Calu3 (cell line): ENCODE measurements at regions of chr10 and their contacts with region 1.

Region 1: GRCh38 chr10:77846718-77847630 is 79.6 kb downstream of the DLG5 start:
- DNase-seq: peak; percentile 91
- H3K4me3 Mint-ChIP-seq: no peak overlapping the region
- H3K27ac Mint-ChIP-seq: peak overlapping the region; percentile 21
- H3K4me1 Mint-ChIP-seq: peaks cover 66% of the 10 kb centered on the region
- H3K27me3 Mint-ChIP-seq: no peaks in the 10 kb centered on the region
- CTCF ChIP-seq: peak; percentile 97

Region 2: DNA sequence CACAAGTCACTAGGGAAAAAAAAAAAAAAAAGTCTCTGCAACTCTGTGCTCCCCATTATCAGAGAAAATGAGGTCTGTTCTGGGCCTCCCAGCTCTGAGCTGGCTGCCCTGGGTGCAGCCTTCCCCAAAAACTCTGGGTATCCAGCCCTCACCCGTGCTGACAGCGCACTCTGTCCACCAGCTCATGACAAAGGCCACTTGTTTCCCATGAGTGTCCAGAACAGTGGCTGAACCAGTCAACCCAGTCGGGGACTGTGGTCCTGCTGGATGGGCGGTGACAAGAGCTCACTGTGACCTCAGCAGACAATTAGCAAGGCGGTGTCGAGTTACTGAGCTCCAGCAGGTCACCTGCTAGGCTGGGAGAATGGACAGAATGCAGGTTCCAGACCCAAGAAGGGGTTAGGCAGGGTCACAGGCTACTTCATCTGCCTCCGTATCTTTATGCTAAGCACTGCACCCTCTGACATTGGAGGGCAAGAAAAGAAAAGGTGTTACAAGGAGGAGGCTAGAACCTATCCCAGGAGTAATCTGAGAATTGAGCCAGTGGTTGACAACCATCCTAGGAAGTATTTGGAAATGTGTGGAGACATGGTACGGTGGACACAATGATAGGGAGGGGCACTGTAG is 42.4 kb after region 1 on chr10:
- CTCF ChIA-PET with region 1: interaction called, 7 read pairs
- intact Hi-C with region 1: loop called (anchors 5 kb)
- DNase-seq: peak; percentile 97
- H3K4me3 Mint-ChIP-seq: peak overlapping the region; percentile 47
- H3K27ac Mint-ChIP-seq: peak overlapping the region; percentile 87
- H3K4me1 Mint-ChIP-seq: peaks cover 57% of the 10 kb centered on the region
- H3K27me3 Mint-ChIP-seq: no peaks in the 10 kb centered on the region
- CTCF ChIP-seq: no peak

Region 3: DNA sequence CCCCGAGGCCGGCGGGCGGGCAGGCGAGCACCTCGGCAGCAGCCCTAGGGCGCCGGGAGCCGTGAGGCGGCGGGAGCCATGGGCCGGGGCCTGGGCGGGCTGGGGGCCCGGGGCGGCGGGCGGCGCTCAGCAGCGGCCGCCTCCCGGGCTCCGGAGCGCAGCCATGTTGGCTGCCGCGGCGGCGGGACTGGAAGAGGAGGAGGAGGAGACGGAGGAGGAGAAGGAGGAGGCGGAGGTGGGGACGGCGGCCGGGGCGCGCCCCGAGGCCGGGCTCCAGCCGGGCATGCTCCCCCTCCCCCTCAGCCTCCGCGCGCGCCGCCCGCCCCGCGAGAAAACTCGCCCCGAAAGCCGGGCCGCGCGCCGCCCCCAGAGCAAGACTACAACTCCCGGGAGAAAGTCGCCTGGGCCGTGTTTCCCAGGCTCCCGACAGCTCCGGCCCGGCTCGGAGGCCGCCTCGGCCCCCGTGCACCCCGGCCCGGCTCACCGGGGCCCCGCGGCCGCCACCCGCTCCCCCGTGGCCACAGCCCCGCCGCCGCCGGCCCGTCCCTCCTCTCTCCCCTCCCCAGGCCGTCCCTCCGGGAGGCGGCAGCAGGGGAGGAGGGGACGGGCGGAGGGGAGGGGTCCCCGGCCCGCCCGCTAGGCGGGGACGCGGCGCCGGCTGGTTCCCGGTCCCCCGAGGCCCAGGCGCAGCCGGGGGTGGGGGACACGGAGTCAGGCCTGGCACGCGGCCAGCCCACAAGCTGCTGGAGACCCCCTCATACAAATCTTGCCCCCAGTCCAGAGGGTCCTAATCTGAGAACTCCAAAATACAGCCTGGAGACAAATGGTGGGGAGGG is 79.8 kb after region 1 on chr10 and contains the start of gene DLG5:
- CTCF ChIA-PET with region 1: interaction called, 4 read pairs
- intact Hi-C with region 1: loop called (anchors 1 kb)
- DNase-seq: peak; percentile 69
- H3K4me3 Mint-ChIP-seq: peak within 1 kb of the TSS; percentile 81
- H3K27ac Mint-ChIP-seq: peak within 1 kb of the TSS; percentile 54
- H3K4me1 Mint-ChIP-seq: peaks cover 19% of the 10 kb centered on the region
- H3K27me3 Mint-ChIP-seq: peaks cover 26% of the 10 kb centered on the region
- CTCF ChIP-seq: peak; percentile 15
- total RNA-seq, gene DLG5: 46.0 and 51.0 TPM in 2 replicates

Region 4: GRCh38 chr10:77970869-77971803 is 124.2 kb after region 1 on chr10:
- CTCF ChIA-PET with region 1: interaction called, 15 read pairs
- intact Hi-C with region 1: loop called (anchors 1 kb)
- DNase-seq: no peak
- H3K4me3 Mint-ChIP-seq: no peak overlapping the region
- H3K27ac Mint-ChIP-seq: no peak overlapping the region
- H3K4me1 Mint-ChIP-seq: no peaks in the 10 kb centered on the region
- H3K27me3 Mint-ChIP-seq: no peaks in the 10 kb centered on the region
- CTCF ChIP-seq: no peak

Region 5: DNA sequence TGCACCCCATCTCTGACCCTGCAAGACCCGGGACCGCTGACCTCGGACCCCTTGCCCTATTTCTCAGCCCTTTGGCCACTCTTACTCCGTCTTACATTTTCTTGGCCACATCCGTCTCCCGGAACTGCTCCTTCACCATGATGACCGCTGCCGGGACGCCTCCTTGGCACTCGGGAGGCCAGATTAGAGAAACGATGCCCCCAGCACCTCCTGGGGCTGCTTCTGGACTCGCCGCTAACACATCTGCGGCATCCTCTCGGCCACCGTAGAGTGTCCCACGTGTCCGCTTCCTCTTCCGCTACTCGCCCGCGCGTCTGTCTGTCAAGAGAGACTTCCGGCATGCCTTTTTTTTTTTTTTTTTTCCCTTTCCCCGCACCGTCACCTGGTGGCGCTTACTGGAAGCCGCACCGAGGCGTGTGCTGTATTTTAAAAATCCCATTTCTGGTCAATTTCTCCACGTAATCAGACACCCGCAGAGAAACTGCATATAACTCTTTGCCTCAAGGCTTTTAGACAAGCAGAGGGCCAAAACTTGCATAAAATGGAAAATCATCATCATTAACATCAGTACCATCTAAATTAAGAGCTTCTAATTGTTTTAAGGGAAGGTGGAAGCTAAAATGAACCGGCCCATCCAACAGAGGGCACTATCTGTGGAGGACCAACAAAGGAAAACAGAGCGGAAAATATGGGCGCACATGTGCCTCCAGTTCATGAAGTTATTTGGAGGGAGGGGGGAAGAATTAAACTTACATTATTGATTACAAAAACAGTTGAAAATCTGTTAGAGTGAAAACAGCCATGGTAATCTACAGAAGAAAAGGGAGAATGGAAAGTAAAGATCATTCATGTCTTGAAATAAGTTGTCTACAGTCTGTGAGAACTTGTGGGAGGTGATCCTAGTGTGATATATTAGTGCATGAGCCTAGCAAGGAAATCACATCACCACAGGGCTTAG is 182.6 kb after region 1 on chr10 and contains the start of gene POLR3A:
- CTCF ChIA-PET with region 1: interaction called, 3 read pairs
- intact Hi-C with region 1: loop called (anchors 2 kb)
- DNase-seq: peak; percentile 97
- H3K4me3 Mint-ChIP-seq: peak within 1 kb of the TSS; percentile 88
- H3K27ac Mint-ChIP-seq: peak within 1 kb of the TSS; percentile 91
- H3K4me1 Mint-ChIP-seq: peaks cover 28% of the 10 kb centered on the region
- H3K27me3 Mint-ChIP-seq: no peaks in the 10 kb centered on the region
- CTCF ChIP-seq: peak; percentile 87
- total RNA-seq, gene POLR3A: 26.6 and 30.0 TPM in 2 replicates